ENCODE measurements at regions of chr4 and their contacts with region 1.

Region 1: DNA sequence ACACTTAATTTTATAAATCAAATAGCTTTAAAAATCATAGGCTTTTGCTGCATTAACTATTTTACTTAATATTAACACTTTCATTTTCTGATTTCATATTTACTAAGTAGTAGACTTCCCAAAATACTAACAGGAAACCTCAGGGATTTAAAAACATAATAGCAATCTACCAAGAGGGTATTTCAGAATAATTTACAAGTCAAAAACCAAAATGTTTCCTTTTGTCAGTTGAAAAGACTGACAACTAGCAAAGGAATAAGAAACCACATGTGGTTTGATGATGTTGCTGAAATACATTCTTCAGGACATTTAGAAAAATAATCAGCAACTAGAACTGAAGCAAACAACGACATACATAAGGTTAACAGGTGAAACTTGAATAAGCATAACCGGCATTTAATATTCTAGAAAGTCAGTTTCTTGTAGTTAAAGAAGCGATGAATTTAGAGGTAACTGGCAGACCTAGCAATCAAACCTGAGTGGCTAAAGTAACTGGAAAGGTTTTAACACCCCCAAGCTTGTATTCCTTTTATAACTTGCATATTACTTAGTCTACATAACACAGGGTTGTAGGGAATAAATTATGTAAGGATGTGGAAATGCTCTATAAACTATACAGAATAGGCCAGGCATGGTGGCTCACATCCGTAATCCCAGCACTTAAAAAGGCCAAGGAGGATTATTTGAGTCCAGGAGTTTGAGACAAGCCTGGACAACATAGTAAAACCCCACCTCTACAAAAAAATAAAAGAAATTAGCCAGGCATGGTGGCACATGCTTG is 40.0 kb downstream of the DHX15 start:
- DNase-seq: no peak
- ATAC-seq: no peak
- H3K4me3 Mint-ChIP-seq: no peak overlapping the region
- H3K27ac Mint-ChIP-seq: no peak overlapping the region
- H3K4me1 Mint-ChIP-seq: peaks cover 27% of the 10 kb centered on the region
- H3K27me3 Mint-ChIP-seq: no peaks in the 10 kb centered on the region

Region 2: DNA sequence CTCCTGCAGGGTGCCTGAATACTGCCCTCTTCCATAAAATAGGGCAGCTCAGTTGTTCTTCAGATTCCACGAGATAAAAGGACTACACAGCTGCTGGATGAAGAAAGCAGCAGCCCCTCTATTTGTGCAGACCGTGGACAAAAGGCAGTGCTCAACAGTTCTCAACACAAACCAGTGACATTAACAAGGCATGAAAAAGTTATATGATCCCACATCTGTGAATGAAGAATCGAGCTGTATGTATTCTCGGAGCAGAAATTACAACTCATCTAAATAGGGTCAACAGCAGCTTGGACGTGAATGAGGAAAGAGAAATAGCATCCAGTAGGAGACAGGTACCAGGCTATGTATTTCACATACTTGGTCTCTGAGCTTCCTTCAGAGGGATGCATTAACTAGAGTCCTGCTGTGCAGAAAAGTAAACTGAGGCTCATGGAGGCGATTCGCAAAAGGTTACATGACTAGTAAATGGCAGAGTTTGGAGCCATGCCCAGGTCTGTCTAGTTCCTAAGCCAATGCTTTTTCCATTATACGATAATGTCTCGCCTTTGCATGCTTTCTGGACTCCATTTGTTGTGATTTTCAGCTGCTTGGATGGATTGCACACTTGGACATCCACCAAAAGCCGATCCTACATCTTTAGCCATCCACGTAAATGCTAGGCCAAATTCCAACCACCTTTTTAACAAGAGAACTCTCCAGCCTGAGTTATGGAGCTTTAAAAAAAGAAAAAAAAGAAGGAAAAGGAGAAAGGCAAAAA is 353.3 kb before region 1 on chr4:
- CTCF ChIA-PET with region 1: no interaction called
- POLR2A ChIA-PET with region 1: no interaction called
- intact Hi-C with region 1: no loop called
- DNase-seq: no peak
- ATAC-seq: no peak
- H3K4me3 Mint-ChIP-seq: no peak overlapping the region
- H3K27ac Mint-ChIP-seq: no peak overlapping the region
- H3K4me1 Mint-ChIP-seq: no peaks in the 10 kb centered on the region
- H3K27me3 Mint-ChIP-seq: no peaks in the 10 kb centered on the region

Region 3: DNA sequence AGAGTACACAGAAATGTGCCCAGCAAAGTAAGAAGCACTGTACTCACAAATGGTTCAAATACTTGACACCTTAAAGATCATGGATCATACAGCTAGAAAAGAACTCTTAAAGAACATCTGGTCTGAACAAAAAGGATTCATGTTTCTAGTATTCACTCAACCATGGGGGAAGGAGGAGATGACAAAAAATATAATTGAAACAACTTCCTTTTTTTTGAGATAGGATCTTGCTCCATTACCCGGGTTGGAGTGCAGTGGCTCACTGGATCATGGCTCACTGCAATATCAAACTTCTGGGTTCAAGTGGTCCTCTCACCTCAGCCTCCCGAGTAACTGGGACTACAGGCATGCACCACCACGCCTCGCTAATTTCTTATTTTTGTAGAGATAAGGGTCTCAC is 34.0 kb after region 1 on chr4:
- CTCF ChIA-PET with region 1: no interaction called
- POLR2A ChIA-PET with region 1: no interaction called
- intact Hi-C with region 1: loop called (anchors 1 to 5 kb)
- DNase-seq: no peak
- ATAC-seq: no peak
- H3K4me3 Mint-ChIP-seq: no peak overlapping the region
- H3K27ac Mint-ChIP-seq: peak overlapping the region; percentile 52
- H3K4me1 Mint-ChIP-seq: peaks cover 75% of the 10 kb centered on the region
- H3K27me3 Mint-ChIP-seq: no peaks in the 10 kb centered on the region

Region 4: GRCh38 chr4:25400699-25401399 is 856.5 kb after region 1 on chr4:
- CTCF ChIA-PET with region 1: no interaction called
- POLR2A ChIA-PET with region 1: no interaction called
- intact Hi-C with region 1: no loop called
- DNase-seq: no peak
- ATAC-seq: no peak
- H3K4me3 Mint-ChIP-seq: no peak overlapping the region
- H3K27ac Mint-ChIP-seq: no peak overlapping the region
- H3K4me1 Mint-ChIP-seq: no peaks in the 10 kb centered on the region
- H3K27me3 Mint-ChIP-seq: no peaks in the 10 kb centered on the region